ENCODE measurements at regions of chrX and their contacts with region 1.

Region 1: GRCh38 chrX:47200385-47201150 is 6.9 kb downstream of the UBA1 start:
- DNase-seq: peak; percentile 48 to 88
- ATAC-seq: peak; percentile 90 to 92
- H3K4me3 ChIP-seq: no peak overlapping the region
- H3K27ac ChIP-seq: peak overlapping the region; percentile 61 to 86
- H3K4me1 ChIP-seq: peaks cover 58% of the 10 kb centered on the region
- CTCF ChIP-seq: no peak; the same call in 2 of the 3 replicates
- EP300 ChIP-seq: no peak
- POLR2A ChIP-seq: no peak
- RAD21 ChIP-seq: peak in 1 of 2 experiments; percentile 23; a peak in 1 of 5 replicates

Region 2: DNA sequence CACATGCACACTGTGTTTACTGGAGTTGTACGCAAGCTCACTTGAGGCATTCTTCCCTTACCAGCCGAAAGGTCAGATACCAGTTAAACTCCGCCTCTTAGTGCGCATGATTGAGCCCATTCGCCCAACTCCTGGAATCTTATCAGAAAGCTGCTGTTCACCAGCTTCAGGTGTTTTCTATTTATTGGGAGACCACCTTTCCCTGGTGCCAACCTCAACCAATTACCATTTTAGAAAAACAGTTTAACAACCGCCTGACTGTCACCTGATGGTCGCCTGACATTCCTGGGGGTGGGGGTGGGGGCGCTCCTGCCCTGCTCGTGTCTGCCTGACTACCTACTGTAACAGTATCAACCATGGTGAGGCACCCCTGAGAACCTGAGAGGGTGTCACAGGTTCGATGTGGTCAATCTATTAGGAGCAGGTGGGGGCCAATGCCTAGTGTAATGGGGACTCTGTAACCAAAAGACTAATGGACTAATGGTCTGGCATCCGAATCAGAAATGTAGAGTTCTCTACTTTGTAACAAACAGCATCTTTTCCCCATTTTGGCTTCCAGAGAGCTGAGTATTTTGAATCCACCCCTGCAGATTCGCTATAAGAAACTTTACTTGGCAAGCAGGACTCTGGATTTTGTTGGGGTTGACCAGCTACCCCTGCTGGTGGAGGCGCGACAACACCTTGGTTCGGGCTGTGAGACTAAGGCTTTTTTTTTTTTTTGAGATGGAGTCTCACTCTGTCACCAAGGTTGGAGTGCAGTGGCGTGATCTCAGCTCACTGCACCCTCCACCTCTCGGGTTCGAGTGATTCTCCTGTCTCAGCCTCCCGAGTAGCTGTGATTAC is 111.6 kb after region 1 on chrX:
- CTCF ChIA-PET with region 1: interaction called, 10 read pairs
- POLR2A ChIA-PET with region 1: no interaction called
- DNase-seq: peak; percentile 30 to 76
- ATAC-seq: peak; percentile 88 to 93
- H3K4me3 ChIP-seq: no peak overlapping the region
- H3K27ac ChIP-seq: no peak overlapping the region; a peak in 1 of 6 replicates
- H3K4me1 ChIP-seq: no peaks in the 10 kb centered on the region
- CTCF ChIP-seq: peak; percentile 48
- EP300 ChIP-seq: no peak
- POLR2A ChIP-seq: no peak
- RAD21 ChIP-seq: peak; percentile 55 to 59